ENCODE measurements at regions of chr5 and their contacts with region 1.

Region 1: DNA sequence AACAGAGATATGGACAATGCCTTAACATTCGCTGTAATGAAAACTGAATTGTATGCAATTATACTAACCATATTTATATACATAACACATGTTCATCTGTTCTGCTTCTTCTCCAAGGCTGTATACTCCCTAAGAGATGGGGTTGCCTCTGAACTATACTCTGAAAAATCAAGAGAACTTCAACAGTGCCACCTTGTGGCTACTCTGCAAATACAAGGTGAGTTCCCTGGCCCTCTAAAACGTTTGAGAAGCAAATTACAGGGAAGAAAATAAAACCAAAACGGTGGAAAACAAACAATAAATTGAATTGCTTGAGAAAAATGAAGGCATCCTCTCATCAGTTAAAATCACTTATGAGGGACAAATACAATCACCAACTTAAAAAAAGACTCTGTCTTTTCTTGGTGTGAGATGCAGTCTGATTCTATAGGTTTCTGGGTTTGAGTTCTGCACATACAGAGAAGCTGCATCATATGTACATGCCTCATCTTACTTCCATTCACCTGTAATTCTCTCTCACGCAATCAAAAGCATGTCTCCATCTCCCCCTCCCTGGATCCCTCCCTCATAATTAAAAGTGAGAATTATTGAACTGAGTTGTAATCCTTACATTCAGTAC is 98.6 kb downstream of the FBXW11 start:
- DNase-seq: peak; percentile 86
- H3K4me3 Mint-ChIP-seq: no peak overlapping the region
- H3K27ac Mint-ChIP-seq: peak overlapping the region; percentile 76
- H3K4me1 Mint-ChIP-seq: peaks cover 36% of the 10 kb centered on the region
- H3K27me3 Mint-ChIP-seq: no peaks in the 10 kb centered on the region

Region 2: GRCh38 chr5:171600741-171601265 is 307.0 kb before region 1 on chr5:
- intact Hi-C with region 1: loop called (anchors 2 kb)
- DNase-seq: no peak
- H3K4me3 Mint-ChIP-seq: no peak overlapping the region
- H3K27ac Mint-ChIP-seq: peak overlapping the region; percentile 30
- H3K4me1 Mint-ChIP-seq: peaks cover 5% of the 10 kb centered on the region
- H3K27me3 Mint-ChIP-seq: peaks cover 10% of the 10 kb centered on the region

Region 3: GRCh38 chr5:171897231-171897630 is 10.6 kb before region 1 on chr5:
- intact Hi-C with region 1: loop called (anchors 1 kb)
- DNase-seq: no peak
- H3K4me3 Mint-ChIP-seq: no peak overlapping the region
- H3K27ac Mint-ChIP-seq: no peak overlapping the region
- H3K4me1 Mint-ChIP-seq: peaks cover 16% of the 10 kb centered on the region
- H3K27me3 Mint-ChIP-seq: no peaks in the 10 kb centered on the region

Region 4: DNA sequence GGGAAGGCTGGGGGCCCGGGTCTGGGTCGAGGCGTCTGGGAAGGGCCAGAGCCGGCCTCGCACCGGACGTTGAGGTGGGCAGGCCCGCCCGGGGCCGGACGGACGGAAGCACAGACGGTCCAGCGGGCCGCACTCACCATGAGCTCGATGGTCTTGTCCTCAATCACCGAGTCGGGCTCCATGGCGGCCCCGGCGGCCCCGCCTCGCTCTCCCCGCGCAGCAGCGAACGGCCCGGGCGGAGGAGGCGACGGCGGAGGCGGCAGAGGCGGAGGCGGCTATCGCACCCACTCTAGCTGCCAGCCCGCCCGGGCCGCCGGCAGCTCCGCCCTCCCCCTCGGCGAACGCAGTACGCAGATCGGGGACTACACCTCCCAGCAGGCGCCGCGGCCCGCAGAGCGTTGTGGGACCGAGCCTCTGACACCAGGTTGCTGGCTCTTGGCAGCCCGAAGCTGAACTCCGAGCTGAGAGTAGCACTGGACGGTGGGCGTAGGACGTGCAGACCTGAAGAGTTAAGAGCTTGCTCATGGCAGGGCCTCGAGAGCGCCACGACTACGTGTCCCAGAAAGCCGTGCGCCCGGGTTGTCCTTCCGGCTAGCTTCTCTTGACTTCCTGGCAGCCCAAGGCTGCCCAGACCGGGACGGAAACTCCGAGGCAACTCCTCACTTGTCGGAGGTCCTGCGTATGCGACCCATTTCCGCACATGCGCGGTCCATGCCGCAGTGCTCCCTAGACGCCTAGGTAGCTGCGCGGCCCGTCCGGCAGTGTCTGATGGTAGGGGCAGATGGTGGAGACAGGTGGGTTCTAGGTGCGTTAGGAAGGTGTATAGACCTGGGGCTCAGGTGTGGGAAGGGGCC is 98.7 kb after region 1 on chr5 and contains the start of gene FBXW11:
- intact Hi-C with region 1: loop called (anchors 1 kb)
- DNase-seq: peak; percentile 98
- H3K4me3 Mint-ChIP-seq: peak within 1 kb of the TSS; percentile 99
- H3K27ac Mint-ChIP-seq: peak within 1 kb of the TSS; percentile 99
- H3K4me1 Mint-ChIP-seq: peaks cover 46% of the 10 kb centered on the region
- H3K27me3 Mint-ChIP-seq: no peaks in the 10 kb centered on the region
- total RNA-seq, gene FBXW11: 53.3 and 54.4 TPM in 2 replicates

Region 5: GRCh38 chr5:172188033-172188892 is 280.4 kb after region 1 on chr5 and contains the start of gene STK10:
- intact Hi-C with region 1: loop called (anchors 1 kb)
- DNase-seq: peak; percentile 97
- H3K4me3 Mint-ChIP-seq: peak within 1 kb of the TSS; percentile 99
- H3K27ac Mint-ChIP-seq: peak within 1 kb of the TSS; percentile 99
- H3K4me1 Mint-ChIP-seq: peaks cover 38% of the 10 kb centered on the region
- H3K27me3 Mint-ChIP-seq: peaks cover 7% of the 10 kb centered on the region
- total RNA-seq, gene STK10: 87.9 and 91.1 TPM in 2 replicates

Region 6: DNA sequence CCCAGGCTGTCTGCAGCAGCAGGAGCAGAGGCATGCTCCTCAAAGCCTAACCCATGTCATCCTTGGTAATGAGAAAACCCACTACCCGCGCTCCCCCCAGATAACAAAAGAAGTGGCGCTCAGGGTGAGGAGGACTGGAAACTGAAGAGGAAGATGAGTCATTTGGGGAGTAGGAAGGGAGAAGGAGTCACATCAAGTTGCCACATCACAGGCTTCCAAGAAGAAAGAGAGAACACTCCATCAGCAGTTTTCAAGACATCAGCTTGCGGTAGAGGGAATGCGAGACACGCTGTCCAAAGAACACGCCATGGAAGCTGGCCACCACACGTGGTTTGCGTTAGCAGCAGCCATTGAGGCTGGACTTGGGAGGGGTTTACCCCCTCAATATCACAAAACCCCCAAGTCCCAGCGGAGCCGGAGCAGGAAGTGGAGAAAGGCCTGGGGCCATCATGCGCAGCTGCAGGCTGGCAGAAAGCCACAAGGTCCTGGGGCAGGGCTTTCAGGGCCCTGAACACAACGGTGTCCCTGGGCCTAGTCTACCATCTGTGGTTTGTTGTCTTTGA is 505.0 kb after region 1 on chr5:
- intact Hi-C with region 1: loop called (anchors 2 kb)
- DNase-seq: peak; percentile 65
- H3K4me3 Mint-ChIP-seq: peak overlapping the region; percentile 63
- H3K27ac Mint-ChIP-seq: peak overlapping the region; percentile 80
- H3K4me1 Mint-ChIP-seq: peaks cover 29% of the 10 kb centered on the region
- H3K27me3 Mint-ChIP-seq: peaks cover 8% of the 10 kb centered on the region

Region 7: DNA sequence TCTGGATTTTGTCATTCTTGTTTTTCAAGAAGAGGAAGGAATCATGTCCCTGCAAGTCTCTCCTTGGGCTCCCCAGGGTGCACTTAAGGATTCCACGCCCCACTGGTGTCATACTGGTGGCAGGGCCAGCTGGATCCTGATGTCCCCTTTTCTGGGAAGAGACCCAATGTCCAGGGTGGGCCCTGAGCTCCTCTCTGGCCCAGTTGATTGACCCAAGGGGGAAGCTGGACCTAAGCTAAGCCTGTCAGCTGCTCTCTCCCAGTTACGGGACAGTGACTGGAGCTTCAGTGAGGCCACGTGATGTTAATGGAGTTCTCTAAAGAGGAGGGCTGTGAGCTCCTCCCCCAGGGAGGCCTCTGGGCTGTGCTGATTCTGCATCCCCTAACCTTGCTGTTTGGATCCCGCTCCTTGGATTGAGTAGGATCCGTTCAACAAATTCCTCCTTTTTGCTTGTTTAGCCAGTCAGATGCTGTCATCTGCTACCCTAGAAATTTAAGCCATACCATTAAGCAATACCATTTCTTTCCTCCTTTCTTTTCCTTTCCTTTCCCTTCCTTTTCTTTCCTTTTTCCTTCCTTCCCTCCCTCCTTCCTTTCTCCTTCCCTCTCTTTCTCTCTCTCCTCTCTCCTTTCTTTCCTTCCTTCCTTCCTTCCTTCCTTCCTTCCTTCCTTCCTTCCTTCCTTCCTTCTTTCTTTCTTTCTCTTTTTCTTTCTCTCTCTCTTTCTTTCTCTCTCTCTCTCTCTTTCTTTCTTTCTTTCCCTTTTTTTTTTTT is 1310.0 kb after region 1 on chr5:
- intact Hi-C with region 1: no loop called
- DNase-seq: no peak
- H3K4me3 Mint-ChIP-seq: no peak overlapping the region
- H3K27ac Mint-ChIP-seq: no peak overlapping the region
- H3K4me1 Mint-ChIP-seq: no peaks in the 10 kb centered on the region
- H3K27me3 Mint-ChIP-seq: peaks cover 10% of the 10 kb centered on the region